ENCODE measurements at regions of chr10 and their contacts with region 1.

Region 1: GRCh38 chr10:102132563-102133372 is at the start of gene PPRC1:
- DNase-seq: peak; percentile 82 to 97 (median 86)
- ATAC-seq: peak; percentile 96
- H3K4me3 ChIP-seq: peak within 1 kb of the TSS; percentile 96
- H3K27ac ChIP-seq: peak within 1 kb of the TSS; percentile 91
- H3K4me1 ChIP-seq: peaks cover 22 to 24% of the 10 kb centered on the region in 2 experiments; a peak in 4 of 5 replicates
- H3K27me3 ChIP-seq: no peaks in the 10 kb centered on the region
- CTCF ChIP-seq: peak; percentile 80 to 91 (median 81)
- EP300 ChIP-seq: peak; percentile 24; the same call in 1 of the 2 replicates
- POLR2A ChIP-seq: peak; percentile 89
- RAD21 ChIP-seq: peak; percentile 54 to 69
- polyA plus RNA-seq, gene PPRC1: 8.5 to 9.0 TPM

Region 2: GRCh38 chr10:102121754-102122372 is 10.9 kb before region 1 on chr10:
- CTCF ChIA-PET with region 1: interaction called, 3 read pairs
- POLR2A ChIA-PET with region 1: interaction called, 16 read pairs
- in situ Hi-C with region 1: no loop called
- intact Hi-C with region 1: no loop called
- DNase-seq: peak in 1 of 4 experiments; percentile 28
- ATAC-seq: no peak
- H3K4me3 ChIP-seq: no peak overlapping the region
- H3K27ac ChIP-seq: peak overlapping the region; percentile 90; the same call in 1 of the 3 replicates
- H3K4me1 ChIP-seq: peaks cover 23 to 40% of the 10 kb centered on the region in 2 experiments
- H3K27me3 ChIP-seq: no peaks in the 10 kb centered on the region
- CTCF ChIP-seq: peak in 1 of 3 experiments; percentile 16; a peak in 1 of 6 replicates
- EP300 ChIP-seq: no peak
- POLR2A ChIP-seq: no peak
- RAD21 ChIP-seq: no peak

Region 3: GRCh38 chr10:102151774-102152544 is 19.2 kb after region 1 on chr10 and contains the start of gene NOLC1:
- CTCF ChIA-PET with region 1: no interaction called
- POLR2A ChIA-PET with region 1: interaction called, 92 read pairs
- in situ Hi-C with region 1: no loop called
- intact Hi-C with region 1: loop called (anchors 1 kb)
- DNase-seq: peak; percentile 84 to 98 (median 90)
- ATAC-seq: peak; percentile 97
- H3K4me3 ChIP-seq: peak within 1 kb of the TSS; percentile 97
- H3K27ac ChIP-seq: peak within 1 kb of the TSS; percentile 97
- H3K4me1 ChIP-seq: peaks cover 10 to 21% of the 10 kb centered on the region in 2 experiments; a peak in 4 of 5 replicates
- H3K27me3 ChIP-seq: no peaks in the 10 kb centered on the region
- CTCF ChIP-seq: no peak
- EP300 ChIP-seq: no peak; the same call in 1 of the 2 replicates
- POLR2A ChIP-seq: peak; percentile 94
- RAD21 ChIP-seq: no peak
- polyA plus RNA-seq, gene NOLC1: 102 to 165 TPM

Measured in K562 (cell line).